Activated CD4-positive, alpha-beta T cell treated with anti-CD3 and anti-CD28 coated beads, Interleukin-2, amount 10 ng/mL, durations not matched to agents 24 days and 14 days (primary cell): ENCODE measurements at regions of chr2 and their contacts with region 1.

Region 1: DNA sequence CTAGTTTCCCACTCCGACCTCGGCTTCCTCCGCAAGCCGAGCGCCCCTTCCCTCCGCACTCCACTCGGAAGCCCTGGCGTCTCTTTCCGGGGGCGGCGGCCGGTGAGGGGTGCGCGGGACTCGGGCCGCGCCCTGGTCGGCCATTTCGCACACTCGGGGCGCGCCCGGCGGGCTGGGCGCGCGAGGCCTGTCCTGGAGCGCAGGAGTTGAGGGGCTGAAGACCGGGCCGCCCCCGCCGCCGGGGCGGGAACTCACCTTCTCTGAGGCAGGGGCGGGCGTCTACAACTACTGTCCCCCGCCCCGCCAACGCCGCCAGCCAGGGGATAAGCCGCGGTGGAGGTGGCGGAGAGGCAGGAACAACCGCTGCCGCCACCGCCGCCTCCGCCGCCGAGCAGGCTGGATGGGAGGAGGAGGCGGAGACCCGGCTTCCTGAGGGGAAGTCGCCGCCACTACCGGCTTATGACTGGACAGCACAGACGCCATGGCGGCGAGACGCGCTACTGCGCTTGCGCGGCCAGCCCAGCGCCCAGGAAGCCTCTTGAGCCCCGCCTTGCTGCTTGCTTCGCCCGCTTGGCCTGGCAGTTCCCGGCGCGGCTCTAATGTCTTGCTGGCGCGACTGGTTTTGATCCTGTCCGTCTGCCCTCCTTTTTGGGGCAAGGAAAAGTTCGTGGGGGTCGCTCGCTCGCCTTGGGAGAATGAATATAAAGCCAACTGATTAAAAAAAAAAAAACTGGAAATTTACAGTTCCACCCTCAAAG is at the start of gene KRCC1:
- DNase-seq: peak; percentile 98
- H3K4me3 Mint-ChIP-seq: peak within 1 kb of the TSS; percentile 97
- H3K27ac Mint-ChIP-seq: peak within 1 kb of the TSS; percentile 96
- H3K4me1 Mint-ChIP-seq: peaks cover 55% of the 10 kb centered on the region
- H3K27me3 Mint-ChIP-seq: no peaks in the 10 kb centered on the region
- total RNA-seq, gene KRCC1: 16.5 and 16.9 TPM in 2 replicates

Region 2: GRCh38 chr2:88016086-88016959 is 39.2 kb before region 1 on chr2 and contains the start of gene RNU2-63P:
- intact Hi-C with region 1: loop called (anchors 1 kb)
- DNase-seq: peak; percentile 94
- H3K4me3 Mint-ChIP-seq: peak within 1 kb of the TSS; percentile 96
- H3K27ac Mint-ChIP-seq: peak within 1 kb of the TSS; percentile 97
- H3K4me1 Mint-ChIP-seq: peaks cover 14% of the 10 kb centered on the region
- H3K27me3 Mint-ChIP-seq: no peaks in the 10 kb centered on the region
- total RNA-seq, gene RNU2-63P: 34.0 and 34.9 TPM in 2 replicates

Region 3: GRCh38 chr2:88159955-88160415 is 104.4 kb after region 1 on chr2:
- intact Hi-C with region 1: loop called (anchors 1 kb)
- DNase-seq: peak; percentile 88
- H3K4me3 Mint-ChIP-seq: no peak overlapping the region
- H3K27ac Mint-ChIP-seq: no peak overlapping the region
- H3K4me1 Mint-ChIP-seq: no peaks in the 10 kb centered on the region
- H3K27me3 Mint-ChIP-seq: peaks cover 22% of the 10 kb centered on the region

Region 4: GRCh38 chr2:88638743-88639142 is 583.2 kb after region 1 on chr2:
- intact Hi-C with region 1: no loop called
- DNase-seq: peak; percentile 76
- H3K4me3 Mint-ChIP-seq: peak overlapping the region; percentile 48
- H3K27ac Mint-ChIP-seq: peak overlapping the region; percentile 86
- H3K4me1 Mint-ChIP-seq: peaks cover 44% of the 10 kb centered on the region
- H3K27me3 Mint-ChIP-seq: no peaks in the 10 kb centered on the region